ENCODE measurements at regions of chr7 and their contacts with region 1.

Region 1: GRCh38 chr7:7640221-7641128 is at the start of gene UMAD1:
- DNase-seq: peak; percentile 100
- H3K4me3 ChIP-seq: peak within 1 kb of the TSS; percentile 83 to 97 (median 96)
- H3K27ac ChIP-seq: peak within 1 kb of the TSS; percentile 94
- H3K4me1 ChIP-seq: peaks cover 7% of the 10 kb centered on the region
- H3K27me3 ChIP-seq: no peaks in the 10 kb centered on the region
- CTCF ChIP-seq: no peak
- total RNA-seq, gene UMAD1: 12.0 to 12.7 TPM

Region 2: DNA sequence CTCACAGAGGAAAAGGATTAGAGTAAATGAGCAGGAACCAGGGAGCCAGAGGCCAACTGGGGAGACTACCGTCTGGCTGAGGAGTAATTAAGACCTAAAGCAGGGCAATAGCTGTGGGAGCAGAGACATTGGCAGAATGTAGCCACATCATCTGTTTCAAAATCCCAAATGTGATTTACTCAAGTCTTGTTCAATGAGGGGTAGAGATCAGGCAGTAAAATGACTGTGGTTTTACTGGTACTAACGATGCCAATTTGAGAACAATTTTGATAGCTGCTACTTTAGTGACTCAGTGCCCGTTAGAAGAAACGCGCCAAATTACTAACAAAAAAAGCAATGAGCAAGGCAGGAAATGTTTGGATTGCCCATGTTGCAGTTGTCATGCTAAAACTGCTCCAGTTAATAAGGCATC is 86.4 kb before region 1 on chr7:
- CTCF ChIA-PET with region 1: no interaction called
- dilution Hi-C with region 1: no loop called
- in situ Hi-C with region 1: no loop called
- intact Hi-C with region 1: no loop called
- DNase-seq: peak; percentile 8
- H3K4me3 ChIP-seq: no peak overlapping the region
- H3K27ac ChIP-seq: no peak overlapping the region
- H3K4me1 ChIP-seq: no peaks in the 10 kb centered on the region
- H3K27me3 ChIP-seq: no peaks in the 10 kb centered on the region
- CTCF ChIP-seq: no peak

Region 3: DNA sequence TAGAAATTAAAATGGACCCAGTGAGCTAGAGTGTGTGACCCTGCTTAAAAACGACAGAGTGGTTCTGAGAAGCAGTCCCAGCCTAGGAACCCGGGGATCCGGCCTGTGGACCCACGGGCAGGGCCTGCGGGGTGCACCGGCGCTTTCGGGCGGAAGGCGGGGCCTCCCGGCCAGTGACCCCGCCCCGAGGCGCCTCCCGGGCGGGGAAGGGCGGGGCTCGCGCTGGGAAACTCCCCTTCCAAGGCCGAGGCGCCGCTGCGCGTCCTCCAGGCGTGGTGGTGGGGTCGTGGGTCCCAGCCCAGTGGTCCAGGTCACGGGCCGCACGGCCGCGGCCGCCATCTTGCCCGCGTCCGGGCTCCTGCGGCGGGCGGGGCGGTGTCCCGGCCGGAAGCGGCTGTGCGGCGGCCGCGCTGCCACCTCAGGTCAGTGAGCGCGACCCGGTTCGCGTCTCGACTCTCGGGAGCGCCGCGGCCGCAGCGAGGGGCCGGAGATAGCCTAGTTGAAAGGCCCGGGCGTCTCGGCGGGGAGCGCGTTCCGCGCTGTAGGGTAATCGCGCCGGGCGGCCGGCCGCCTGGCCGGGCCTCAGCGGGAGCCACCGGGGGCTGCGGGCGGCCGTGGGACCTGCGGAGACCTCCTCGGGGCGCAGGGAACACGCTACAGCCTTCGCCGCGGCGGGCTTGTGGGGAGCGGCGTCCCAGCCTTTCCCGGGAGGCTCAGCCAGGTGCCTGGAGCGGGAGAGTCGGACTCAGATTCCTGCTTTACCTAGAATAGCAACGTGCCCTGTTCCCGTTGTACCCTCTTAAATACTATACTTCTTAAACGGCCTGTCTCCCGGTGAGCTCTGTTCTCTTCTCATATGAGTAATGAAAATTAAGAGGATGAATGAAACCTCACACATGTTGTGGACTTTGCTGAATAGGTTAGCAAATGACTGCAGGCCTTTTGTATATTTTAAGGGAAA is 73.5 kb before region 1 on chr7 and contains the start of gene MIOS:
- CTCF ChIA-PET with region 1: no interaction called
- dilution Hi-C with region 1: no loop called
- in situ Hi-C with region 1: no loop called
- intact Hi-C with region 1: loop called (anchors 2 kb)
- DNase-seq: peak; percentile 73
- H3K4me3 ChIP-seq: peak within 1 kb of the TSS; percentile 54 to 85 (median 70)
- H3K27ac ChIP-seq: peak within 1 kb of the TSS; percentile 69
- H3K4me1 ChIP-seq: peaks cover 39% of the 10 kb centered on the region
- H3K27me3 ChIP-seq: no peaks in the 10 kb centered on the region
- CTCF ChIP-seq: no peak
- total RNA-seq, gene MIOS: 27.5 to 36.8 TPM

Region 4: DNA sequence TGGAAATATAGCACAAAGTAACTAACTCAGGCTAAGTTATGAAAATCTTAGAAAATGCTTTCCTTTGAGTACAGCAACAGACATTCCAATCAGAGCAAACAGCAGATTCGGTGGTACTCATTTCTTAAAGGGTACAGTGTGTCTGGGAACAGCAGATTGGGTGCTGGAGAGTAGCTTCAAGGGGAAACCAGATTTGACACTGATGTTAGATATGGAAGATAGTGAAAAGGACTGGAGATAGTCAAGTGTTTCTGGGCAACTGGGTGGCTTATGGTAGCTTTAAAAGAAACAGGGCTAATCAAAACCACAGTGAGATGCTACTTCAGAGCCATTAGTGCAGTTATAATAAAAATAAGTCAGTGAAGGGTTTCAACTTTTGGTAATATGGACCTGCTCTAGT is 12.0 kb before region 1 on chr7:
- CTCF ChIA-PET with region 1: no interaction called
- dilution Hi-C with region 1: no loop called
- in situ Hi-C with region 1: no loop called
- intact Hi-C with region 1: no loop called
- DNase-seq: no peak
- H3K4me3 ChIP-seq: no peak overlapping the region
- H3K27ac ChIP-seq: no peak overlapping the region
- H3K4me1 ChIP-seq: no peaks in the 10 kb centered on the region
- H3K27me3 ChIP-seq: no peaks in the 10 kb centered on the region
- CTCF ChIP-seq: no peak

Measured in mammary epithelial cell (primary cell).